ENCODE measurements at regions of chr11 and their contacts with region 1.

Region 1: DNA sequence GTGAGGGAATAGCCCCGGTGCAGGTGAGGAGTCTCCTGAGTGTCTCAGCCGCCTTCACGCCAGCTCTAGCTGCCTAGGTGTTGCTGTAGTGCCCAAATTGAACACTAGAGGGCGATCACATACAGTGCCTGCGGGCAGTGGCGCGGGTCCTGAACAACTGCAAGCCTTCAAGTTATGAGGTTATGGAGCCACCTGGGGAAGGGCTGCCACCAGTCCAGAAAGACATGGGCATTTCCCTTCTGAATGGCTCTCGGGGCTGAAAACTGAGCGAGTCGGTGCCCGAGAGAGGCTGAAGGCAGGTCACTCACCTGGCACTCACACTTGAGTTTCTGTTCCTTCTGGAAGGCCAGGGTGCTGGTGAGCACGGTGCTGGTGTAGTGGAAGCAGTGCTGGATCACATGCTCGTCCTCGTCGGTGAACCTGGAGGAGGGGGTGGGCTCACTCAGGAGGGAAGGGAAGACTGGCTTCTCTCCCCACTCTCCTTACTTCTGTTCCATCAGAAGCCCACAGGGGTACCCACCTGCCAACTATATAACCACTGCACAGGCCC is 88.4 kb downstream of the PDE2A start:
- DNase-seq: no peak
- H3K4me3 ChIP-seq: no peak overlapping the region
- CTCF ChIP-seq: peak; percentile 79

Region 2: GRCh38 chr11:72483412-72484186 is 102.2 kb before region 1 on chr11:
- CTCF ChIA-PET with region 1: interaction called, 28 read pairs
- POLR2A ChIA-PET with region 1: no interaction called
- DNase-seq: no peak
- H3K4me3 ChIP-seq: no peak overlapping the region
- CTCF ChIP-seq: no peak

Region 3: GRCh38 chr11:72573072-72573854 is 12.6 kb before region 1 on chr11:
- CTCF ChIA-PET with region 1: interaction called, 88 read pairs
- POLR2A ChIA-PET with region 1: no interaction called
- DNase-seq: no peak
- H3K4me3 ChIP-seq: no peak overlapping the region
- CTCF ChIP-seq: peak; percentile 77

Region 4: DNA sequence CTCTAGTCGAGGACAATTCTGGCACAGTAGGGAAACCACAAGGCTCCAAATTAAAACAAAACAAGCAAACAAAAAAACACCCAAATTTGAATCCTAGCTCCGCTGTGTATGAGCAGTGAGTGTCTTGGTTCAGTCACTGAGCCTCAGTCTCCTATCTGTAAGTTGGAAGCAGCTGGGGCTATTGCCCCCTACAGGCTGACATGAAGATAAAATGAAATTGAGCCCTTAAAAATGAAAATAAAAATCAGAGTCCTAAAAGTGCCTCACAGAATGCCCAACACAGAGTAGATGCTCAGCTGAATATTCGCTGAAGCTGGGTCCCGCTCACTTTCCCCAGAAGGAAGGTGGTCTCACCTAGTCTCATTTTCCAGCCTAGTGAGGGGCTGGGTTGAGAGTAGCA is 23.2 kb after region 1 on chr11:
- CTCF ChIA-PET with region 1: interaction called, 87 read pairs
- POLR2A ChIA-PET with region 1: no interaction called
- DNase-seq: no peak
- H3K4me3 ChIP-seq: no peak overlapping the region
- CTCF ChIP-seq: peak; percentile 25

Region 5: DNA sequence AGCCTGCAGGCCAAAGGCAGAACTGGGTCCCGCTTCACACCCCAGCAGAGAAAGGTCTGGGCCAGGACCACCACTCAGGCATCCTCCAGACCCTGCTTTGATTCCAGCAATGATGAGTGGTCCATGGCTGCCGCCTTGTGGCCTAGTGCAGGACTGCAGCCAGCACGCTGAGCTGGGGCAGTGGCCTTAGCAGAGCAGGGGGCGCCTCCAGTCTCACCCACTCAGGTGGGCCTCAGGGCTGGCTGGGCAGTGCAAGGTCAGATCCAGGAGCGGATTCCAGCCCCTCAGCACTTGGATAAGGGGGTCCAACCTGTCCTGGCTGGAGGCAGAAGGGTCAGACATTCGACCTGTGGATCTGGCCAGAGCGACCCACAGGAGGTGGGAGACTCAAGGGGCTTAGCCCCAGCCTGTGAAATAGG is 98.0 kb after region 1 on chr11:
- CTCF ChIA-PET with region 1: interaction called, 116 read pairs
- POLR2A ChIA-PET with region 1: no interaction called
- DNase-seq: no peak
- H3K4me3 ChIP-seq: no peak overlapping the region
- CTCF ChIP-seq: peak; percentile 93

Region 6: DNA sequence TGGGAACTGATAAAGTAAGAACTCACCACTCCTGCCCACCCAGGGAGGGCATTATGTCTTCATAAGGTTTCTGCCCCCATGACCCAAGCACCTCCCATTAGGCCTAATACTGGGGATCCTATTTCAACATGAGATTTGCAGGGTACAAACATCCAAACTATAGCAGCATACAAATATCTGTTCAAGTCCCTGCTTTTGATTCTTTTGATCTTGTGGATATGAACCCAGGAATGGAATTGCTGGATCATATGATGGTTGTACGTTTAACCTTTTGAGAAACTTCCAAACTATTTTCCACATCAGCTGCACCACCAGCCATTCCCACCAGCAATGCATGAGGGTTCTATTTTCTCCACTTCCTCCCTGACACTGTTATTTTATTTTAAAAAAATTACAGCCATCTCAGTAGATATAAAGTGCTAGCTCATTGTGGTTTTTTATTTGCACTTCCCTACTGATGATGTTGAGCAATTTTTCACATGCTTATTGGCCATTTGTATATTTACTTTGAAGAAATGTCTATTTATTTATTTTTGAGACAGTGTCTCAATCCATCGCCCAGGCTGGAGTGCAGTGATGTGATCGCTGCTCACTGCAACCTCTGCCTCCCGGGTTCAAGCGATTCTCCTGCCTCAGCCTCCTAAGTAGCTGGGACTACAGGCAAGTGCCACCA is 221.3 kb after region 1 on chr11:
- CTCF ChIA-PET with region 1: no interaction called
- POLR2A ChIA-PET with region 1: no interaction called
- DNase-seq: no peak
- H3K4me3 ChIP-seq: no peak overlapping the region
- CTCF ChIP-seq: no peak